Left cardiac atrium (tissue), 4 donors: ENCODE measurements at regions of chr5 and their contacts with region 1.

Region 1: GRCh38 chr5:134304311-134304710 is 62.7 kb downstream of the CDKL3 start:
- DNase-seq: no peak
- ATAC-seq: no peak

Region 2: DNA sequence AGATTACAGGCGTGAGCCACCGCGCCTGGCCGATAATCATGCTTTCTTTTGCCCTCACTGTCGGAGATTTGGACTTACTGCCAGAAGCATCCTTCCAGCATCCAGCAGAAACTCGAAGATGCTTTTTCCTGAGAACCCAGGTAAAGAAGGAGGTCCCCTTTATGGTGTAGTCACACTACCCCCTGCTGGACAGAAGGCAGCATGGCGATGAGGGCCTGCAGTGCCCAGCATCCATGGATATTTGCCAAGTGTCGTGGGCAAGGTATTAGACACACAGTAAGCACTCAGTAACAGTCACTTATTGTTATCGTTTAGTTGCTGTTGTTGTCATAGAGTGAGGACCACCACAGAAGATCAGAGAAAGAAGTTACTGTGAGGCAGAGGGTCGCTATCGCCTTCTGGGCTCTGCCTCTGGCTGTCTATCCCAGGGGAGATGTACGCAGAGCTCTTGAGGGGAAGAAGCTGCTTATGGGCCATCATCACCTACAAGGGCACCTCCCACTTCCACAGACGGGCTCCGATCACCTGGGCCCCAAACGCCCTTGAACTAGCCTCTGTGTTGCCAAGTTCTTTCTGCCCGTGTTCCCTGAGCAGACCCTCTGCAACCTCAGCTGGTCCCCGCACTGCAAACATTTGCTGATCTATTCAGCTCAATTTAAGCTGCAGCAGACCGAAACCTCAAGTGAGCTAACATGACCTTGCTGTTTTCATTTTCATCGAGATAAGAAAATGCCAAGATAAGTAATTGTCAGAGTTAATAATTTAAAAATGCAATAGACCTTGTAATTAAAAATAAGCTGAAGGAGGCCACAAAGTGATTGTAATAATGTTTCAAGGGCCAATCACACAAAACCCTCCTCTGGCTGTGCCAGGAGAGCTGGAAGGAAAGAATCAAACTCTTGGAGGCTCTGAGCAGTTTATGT is 359.8 kb before region 1 on chr5:
- intact Hi-C with region 1: no loop called
- DNase-seq: no peak
- ATAC-seq: peak; percentile 33 to 67

Region 3: GRCh38 chr5:134577796-134578363 is 273.6 kb after region 1 on chr5:
- intact Hi-C with region 1: loop called in 1 of 2 experiments (anchors 5 kb)
- DNase-seq: peak; percentile 85
- ATAC-seq: peak; percentile 25 to 66